GM12878 (cell line): ENCODE measurements at regions of chr2 and their contacts with region 1.

Region 1: DNA sequence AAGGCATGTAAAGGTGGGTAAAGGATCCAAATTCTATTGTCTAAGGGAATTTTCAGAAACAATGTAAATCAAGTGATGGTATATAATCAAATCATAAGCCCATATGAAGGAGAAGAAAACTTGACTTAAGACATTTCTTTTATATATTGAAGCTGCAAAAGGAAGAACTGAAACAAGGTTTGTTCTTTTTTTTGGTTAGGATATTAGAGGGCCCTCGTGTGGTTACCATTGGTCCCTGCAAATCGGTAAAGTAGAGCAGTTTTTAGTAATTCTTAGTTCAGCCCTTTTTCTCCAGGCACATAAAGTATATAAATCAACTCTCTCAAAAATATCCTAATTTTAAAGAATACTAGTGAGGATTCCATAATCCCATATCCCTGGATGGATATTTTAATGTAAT is 105.6 kb upstream of the STK17B start:
- DNase-seq: no peak
- ATAC-seq: peak; percentile 48
- H3K4me3 ChIP-seq: no peak overlapping the region
- H3K27ac ChIP-seq: no peak overlapping the region
- H3K4me1 ChIP-seq: peaks cover 27% of the 10 kb centered on the region
- H3K27me3 ChIP-seq: no peaks in the 10 kb centered on the region
- CTCF ChIP-seq: peak; percentile 61 to 72 (median 66); a peak in 5 of 6 replicates
- EP300 ChIP-seq: no peak
- POLR2A ChIP-seq: no peak
- RAD21 ChIP-seq: peak; percentile 82

Region 2: DNA sequence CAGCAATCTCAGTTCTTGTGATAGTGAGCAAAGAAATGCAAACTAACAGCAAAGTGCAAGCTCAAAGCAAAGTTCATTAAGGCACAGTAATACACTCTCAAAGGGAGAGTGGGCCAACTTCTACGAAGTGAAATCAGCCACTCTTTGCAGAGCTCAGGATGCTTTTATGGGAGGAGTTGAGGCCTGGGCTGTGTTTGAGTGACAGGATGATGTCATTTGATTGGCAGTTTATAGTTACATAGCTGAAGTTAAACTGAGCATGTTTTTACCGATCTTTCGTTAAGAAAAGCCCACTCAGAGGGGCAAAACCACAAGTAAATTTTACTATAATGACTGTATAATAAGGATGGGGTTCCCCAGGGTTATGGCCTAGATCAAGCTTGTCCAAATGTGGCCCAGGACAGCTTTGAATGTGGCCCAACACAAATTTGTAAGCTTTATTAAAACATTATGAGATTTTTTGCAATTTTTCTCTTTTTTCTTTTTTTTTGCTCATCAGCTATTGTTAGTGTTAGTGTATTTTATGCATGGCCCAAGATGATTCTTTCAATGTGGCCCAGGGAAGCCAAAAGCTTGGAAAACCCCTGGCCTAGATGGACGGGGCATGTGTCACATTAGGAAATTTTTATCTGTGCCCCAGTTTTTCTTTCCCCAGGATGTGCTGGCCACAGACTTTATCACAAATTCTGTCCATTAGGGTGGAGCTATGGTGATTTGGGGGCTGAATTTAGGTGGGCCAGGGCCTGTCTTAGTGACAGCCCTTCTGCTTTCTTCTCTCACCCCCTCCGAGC is 200.0 kb before region 1 on chr2:
- CTCF ChIA-PET with region 1: interaction called, 197 read pairs
- POLR2A ChIA-PET with region 1: interaction called, 28 read pairs
- RAD21 ChIA-PET with region 1: interaction called, 211 read pairs
- SMC1A ChIA-PET with region 1: interaction called, 248 read pairs
- in situ Hi-C with region 1: loop called (anchors 5 kb)
- intact Hi-C with region 1: loop called (anchors 1 kb)
- DNase-seq: no peak
- ATAC-seq: peak; percentile 68
- H3K4me3 ChIP-seq: no peak overlapping the region
- H3K27ac ChIP-seq: no peak overlapping the region; the same call in 1 of the 2 replicates
- H3K4me1 ChIP-seq: peaks cover 14% of the 10 kb centered on the region
- H3K27me3 ChIP-seq: no peaks in the 10 kb centered on the region
- CTCF ChIP-seq: no peak
- EP300 ChIP-seq: no peak
- POLR2A ChIP-seq: no peak
- RAD21 ChIP-seq: no peak

Region 3: DNA sequence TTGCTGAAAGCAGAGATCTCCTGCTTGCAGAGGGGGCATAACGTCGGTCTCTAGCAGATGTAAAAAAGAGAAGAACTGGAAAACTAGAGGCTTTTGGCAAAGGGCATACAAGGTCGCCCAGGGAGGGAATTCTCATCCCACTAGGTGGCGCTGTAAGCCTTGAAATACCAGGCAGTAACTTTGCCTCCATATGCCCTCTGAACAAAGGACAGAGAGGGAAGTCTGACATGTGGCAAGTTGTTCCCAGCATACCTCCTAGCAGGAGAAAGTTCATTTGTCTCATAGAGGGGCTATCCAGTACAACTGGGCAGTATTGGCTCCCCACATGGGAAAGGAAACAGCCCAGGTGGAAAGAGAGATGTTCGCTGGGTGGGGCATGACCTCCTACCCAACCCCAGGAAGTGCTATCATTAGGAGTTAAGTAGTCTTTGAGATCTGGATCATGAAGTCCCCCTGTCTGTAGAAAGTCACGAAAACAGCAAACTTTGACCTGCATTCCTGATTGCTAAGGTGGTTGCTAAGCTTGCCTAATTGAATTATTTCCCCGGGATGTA is 145.5 kb before region 1 on chr2:
- CTCF ChIA-PET with region 1: interaction called, 11 read pairs
- POLR2A ChIA-PET with region 1: interaction called, 4 read pairs
- RAD21 ChIA-PET with region 1: interaction called, 6 read pairs
- SMC1A ChIA-PET with region 1: interaction called, 14 read pairs
- in situ Hi-C with region 1: no loop called
- intact Hi-C with region 1: loop called (anchors 1 kb)
- DNase-seq: peak; percentile 47
- ATAC-seq: peak; percentile 74
- H3K4me3 ChIP-seq: no peak overlapping the region
- H3K27ac ChIP-seq: no peak overlapping the region
- H3K4me1 ChIP-seq: no peaks in the 10 kb centered on the region
- H3K27me3 ChIP-seq: no peaks in the 10 kb centered on the region
- CTCF ChIP-seq: peak; percentile 39 to 53 (median 49); a peak in 5 of 6 replicates
- EP300 ChIP-seq: no peak
- POLR2A ChIP-seq: no peak
- RAD21 ChIP-seq: peak; percentile 62

Region 4: DNA sequence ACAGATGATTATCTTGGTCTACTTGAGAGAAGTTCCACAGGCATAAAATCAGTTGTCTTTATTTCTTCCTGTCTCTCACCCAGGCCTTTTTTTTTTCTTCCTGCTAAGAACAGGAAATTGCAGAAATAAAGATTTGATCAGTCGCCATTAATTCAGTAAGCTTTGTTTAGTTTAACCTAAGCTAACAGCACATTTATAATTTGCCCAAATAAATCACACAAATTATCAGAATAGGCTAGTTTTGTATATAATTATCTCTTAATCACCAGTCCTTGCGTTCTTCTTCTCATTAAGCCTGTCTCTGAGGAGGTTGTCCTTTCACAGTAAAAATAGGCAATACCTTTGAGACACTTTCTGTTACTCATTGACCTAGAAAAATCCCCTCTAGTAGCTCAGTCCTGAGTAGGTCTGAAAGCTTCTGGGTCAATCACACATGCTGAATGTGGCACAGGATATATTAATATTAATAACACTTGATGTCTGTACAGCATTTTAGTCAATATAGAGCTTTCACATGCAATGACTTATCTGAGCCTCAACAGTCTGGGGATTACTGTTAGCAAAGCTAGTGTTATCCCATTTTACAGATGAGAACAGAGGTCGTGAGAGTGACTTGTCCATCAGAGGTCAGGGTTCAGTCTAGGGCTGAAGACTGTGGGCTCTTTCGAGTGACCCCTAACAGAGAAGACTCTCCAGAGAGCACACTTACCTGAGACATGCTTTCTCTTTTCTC is 94.4 kb before region 1 on chr2:
- CTCF ChIA-PET with region 1: interaction called, 24 read pairs
- POLR2A ChIA-PET with region 1: interaction called, 27 read pairs
- RAD21 ChIA-PET with region 1: interaction called, 73 read pairs
- SMC1A ChIA-PET with region 1: interaction called, 57 read pairs
- in situ Hi-C with region 1: no loop called
- intact Hi-C with region 1: no loop called
- DNase-seq: peak; percentile 71
- ATAC-seq: peak; percentile 87
- H3K4me3 ChIP-seq: no peak overlapping the region
- H3K27ac ChIP-seq: peak overlapping the region; percentile 42
- H3K4me1 ChIP-seq: peaks cover 27% of the 10 kb centered on the region
- H3K27me3 ChIP-seq: no peaks in the 10 kb centered on the region
- CTCF ChIP-seq: no peak
- EP300 ChIP-seq: peak; percentile 31 to 64
- POLR2A ChIP-seq: no peak
- RAD21 ChIP-seq: no peak

Region 5: GRCh38 chr2:196220671-196221070 is 56.3 kb before region 1 on chr2:
- CTCF ChIA-PET with region 1: interaction called, 11 read pairs
- POLR2A ChIA-PET with region 1: interaction called, 4 read pairs
- RAD21 ChIA-PET with region 1: interaction called, 3 read pairs
- SMC1A ChIA-PET with region 1: interaction called, 9 read pairs
- in situ Hi-C with region 1: no loop called
- intact Hi-C with region 1: no loop called
- DNase-seq: no peak
- ATAC-seq: no peak
- H3K4me3 ChIP-seq: no peak overlapping the region
- H3K27ac ChIP-seq: no peak overlapping the region
- H3K4me1 ChIP-seq: no peaks in the 10 kb centered on the region
- H3K27me3 ChIP-seq: no peaks in the 10 kb centered on the region
- CTCF ChIP-seq: no peak; a peak in 1 of 6 replicates
- EP300 ChIP-seq: no peak
- POLR2A ChIP-seq: no peak
- RAD21 ChIP-seq: no peak

Region 6: DNA sequence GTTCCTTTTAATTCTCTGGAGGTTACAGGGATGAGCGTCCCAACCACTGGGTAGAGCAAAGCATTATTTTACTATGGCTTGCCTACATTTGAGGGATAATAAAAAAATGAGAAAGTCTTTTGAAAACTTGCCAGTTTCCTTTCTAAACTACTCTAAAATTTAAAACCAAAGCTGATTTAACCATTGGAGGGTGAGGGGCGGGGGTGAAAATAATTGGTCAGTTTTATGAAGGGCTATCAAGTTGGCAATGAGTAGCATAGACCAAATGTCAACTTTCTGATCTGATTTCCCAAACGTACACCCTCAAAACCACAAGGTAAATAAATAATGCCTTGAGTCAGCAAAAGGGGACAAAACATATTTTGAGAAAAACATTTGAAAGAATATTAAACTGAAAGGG is 19.9 kb before region 1 on chr2:
- CTCF ChIA-PET with region 1: interaction called, 6 read pairs
- POLR2A ChIA-PET with region 1: interaction called, 7 read pairs
- RAD21 ChIA-PET with region 1: interaction called, 19 read pairs
- SMC1A ChIA-PET with region 1: interaction called, 35 read pairs
- in situ Hi-C with region 1: no loop called
- intact Hi-C with region 1: no loop called
- DNase-seq: no peak
- ATAC-seq: no peak
- H3K4me3 ChIP-seq: no peak overlapping the region
- H3K27ac ChIP-seq: no peak overlapping the region
- H3K4me1 ChIP-seq: no peaks in the 10 kb centered on the region
- H3K27me3 ChIP-seq: no peaks in the 10 kb centered on the region
- CTCF ChIP-seq: no peak
- EP300 ChIP-seq: no peak
- POLR2A ChIP-seq: no peak
- RAD21 ChIP-seq: no peak

Region 7: GRCh38 chr2:196967116-196967515 is 690.1 kb after region 1 on chr2:
- CTCF ChIA-PET with region 1: no interaction called
- POLR2A ChIA-PET with region 1: no interaction called
- RAD21 ChIA-PET with region 1: no interaction called
- SMC1A ChIA-PET with region 1: no interaction called
- in situ Hi-C with region 1: no loop called
- intact Hi-C with region 1: no loop called
- DNase-seq: no peak
- ATAC-seq: no peak
- H3K4me3 ChIP-seq: no peak overlapping the region
- H3K27ac ChIP-seq: no peak overlapping the region
- H3K4me1 ChIP-seq: no peaks in the 10 kb centered on the region
- H3K27me3 ChIP-seq: no peaks in the 10 kb centered on the region
- CTCF ChIP-seq: no peak
- EP300 ChIP-seq: no peak
- POLR2A ChIP-seq: no peak
- RAD21 ChIP-seq: no peak